ENCODE measurements at regions of chr16 and their contacts with region 1.

Region 1: DNA sequence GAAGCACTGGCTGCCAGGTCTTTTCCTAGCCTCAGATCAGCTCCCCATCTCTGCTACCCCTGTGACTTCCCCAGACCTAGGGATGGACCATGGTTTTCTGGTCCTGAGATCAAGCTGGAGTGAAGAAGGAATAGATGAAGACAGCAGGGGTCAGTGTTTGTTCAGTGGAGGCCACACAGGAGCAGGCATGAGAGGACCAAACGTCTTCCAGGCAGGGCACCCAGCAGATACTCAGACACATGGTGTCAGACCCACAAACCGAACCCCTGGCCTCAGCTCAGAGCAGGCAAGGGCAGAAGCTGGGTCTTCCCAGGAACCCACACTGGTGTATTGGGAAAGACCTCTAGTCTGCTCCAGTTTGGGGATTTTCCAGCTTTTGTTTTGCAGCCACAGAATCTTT is 189.7 kb downstream of the IRX5 start:
- DNase-seq: no peak
- ATAC-seq: peak in 3 of 4 donors; percentile 61 to 73 (median 67)
- H3K4me3 ChIP-seq: no peak overlapping the region
- H3K27ac ChIP-seq: no peak overlapping the region
- H3K4me1 ChIP-seq: no peaks in the 10 kb centered on the region
- H3K27me3 ChIP-seq: no peaks in the 10 kb centered on the region
- CTCF ChIP-seq: peak; percentile 29

Region 2: GRCh38 chr16:55323637-55324490 is 203.5 kb after region 1 on chr16 and contains the start of gene IRX6:
- intact Hi-C with region 1: loop called in 1 of 2 experiments (anchors 5 kb)
- DNase-seq: peak; percentile 78 to 90
- ATAC-seq: peak; percentile 75 to 87 (median 86)
- H3K4me3 ChIP-seq: peak within 1 kb of the TSS; percentile 61
- H3K27ac ChIP-seq: peak within 1 kb of the TSS; percentile 16
- H3K4me1 ChIP-seq: no peaks in the 10 kb centered on the region
- H3K27me3 ChIP-seq: peaks cover 0 to 36% (median 0%) of the 10 kb centered on the region in 3 donors
- CTCF ChIP-seq: peak; percentile 59
- total RNA-seq, gene IRX6: 0.32 to 2.1 (median 0.74) TPM